ENCODE measurements at regions of chr16 and their contacts with region 1.

Region 1: DNA sequence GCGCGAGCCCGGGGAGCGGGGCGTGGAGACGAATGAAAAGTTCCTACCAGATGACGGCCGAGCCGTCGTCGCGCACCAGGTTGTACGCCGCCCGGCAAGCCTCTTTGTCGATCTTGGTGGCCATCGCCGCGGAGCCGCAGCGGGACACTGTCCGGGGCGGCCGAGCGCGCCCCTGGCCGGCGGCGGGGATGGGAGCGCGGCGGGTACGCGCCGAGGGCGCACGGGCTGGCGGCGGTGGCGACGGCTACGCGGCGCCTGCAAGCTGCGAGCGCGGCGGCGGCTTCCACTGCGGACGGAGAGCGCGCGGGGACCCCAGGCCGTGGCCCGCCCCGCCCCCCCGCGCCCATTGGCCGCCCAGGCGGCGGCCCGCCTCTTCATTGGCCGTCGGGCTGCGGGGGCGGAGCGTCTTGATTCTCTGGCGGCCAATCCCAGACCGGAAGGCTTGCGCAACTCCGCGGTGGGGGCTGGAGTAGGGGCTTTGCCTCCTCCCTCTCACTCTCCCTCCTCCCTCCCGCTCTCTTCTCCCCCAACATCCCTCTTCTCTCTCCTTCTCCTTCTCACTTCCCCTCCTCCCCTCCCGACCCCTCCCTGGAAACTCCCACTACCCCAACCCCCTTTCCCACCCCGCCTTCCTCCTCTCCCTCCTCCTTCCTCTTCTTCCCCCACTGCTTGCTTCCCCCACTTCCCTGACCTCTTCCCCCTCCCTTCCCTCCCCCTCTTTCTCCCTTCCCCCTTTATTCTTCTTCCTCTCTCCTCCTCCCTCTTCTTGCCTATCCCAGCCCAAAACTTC is at the start of gene COTL1:
- DNase-seq: peak; percentile 90
- H3K4me3 ChIP-seq: peak within 1 kb of the TSS; percentile 65
- CTCF ChIP-seq: no peak

Region 2: DNA sequence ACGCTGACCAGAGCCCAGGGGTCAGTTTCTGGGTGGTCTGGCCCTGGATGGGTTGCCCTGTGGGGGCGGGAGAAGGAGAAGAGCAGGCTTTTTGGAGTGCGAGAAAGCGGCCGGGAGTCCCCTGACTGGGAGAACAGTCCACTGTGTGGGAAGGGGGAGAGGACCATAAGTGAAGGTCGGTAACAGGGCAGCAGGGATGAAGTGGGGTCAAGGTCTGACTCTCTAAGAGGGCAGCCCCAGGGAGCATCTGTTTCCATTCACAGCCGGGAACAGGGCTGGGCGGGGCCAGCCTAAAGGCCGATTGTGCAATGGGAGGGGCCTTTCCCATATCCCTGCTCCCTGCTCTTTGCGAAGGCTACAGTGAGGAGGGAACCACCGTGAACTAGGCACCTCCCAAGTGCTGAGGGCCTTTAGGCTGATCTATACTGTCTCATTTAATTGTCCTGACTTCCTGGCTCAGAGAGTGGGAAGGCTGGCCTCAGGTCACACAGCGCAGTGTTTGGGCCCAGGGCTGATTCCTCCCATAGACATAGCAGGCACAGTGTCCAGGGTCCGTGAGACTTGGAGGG is 333.7 kb before region 1 on chr16:
- CTCF ChIA-PET with region 1: no interaction called
- POLR2A ChIA-PET with region 1: no interaction called
- DNase-seq: no peak
- H3K4me3 ChIP-seq: no peak overlapping the region
- CTCF ChIP-seq: no peak

Region 3: DNA sequence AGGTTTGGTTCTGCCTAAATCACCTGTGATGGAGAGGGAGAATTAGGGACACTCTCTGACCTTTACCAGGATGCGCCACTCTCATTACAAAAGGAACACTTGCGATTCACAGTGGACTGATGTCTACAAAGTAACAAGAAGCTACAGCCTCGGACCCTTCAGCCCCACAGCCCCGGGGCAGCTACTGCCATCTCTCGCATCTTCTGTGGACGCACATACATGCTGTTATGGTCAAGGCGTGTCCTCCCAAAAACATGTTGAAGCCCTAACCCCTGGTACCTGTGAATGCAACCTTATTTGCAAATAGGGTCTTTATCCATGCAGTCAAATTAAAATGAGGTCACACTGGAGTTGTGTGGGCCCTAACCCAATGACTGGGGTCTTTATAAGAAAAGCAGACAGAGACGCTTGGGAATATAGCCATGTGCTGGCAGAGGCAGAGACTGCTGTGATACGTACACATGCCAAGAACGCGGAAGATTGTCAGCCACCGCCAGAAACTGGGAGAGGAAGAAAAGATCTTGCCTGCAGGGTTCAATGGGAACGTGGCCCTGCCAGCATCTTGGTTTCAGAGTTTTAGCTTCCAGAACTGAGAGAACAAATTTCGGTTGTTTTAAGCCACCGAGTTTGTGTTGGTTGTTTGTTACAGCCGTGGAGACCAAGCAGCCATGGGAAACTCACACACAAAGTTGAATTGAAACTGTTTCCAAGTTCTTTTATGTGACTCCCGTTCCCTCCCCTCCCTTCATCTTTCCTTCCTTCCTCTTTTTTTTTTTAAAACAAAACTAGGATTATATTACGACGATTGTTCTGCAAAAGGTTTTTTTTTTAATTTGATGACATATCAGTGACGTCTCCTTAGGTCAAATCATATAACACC is 226.6 kb before region 1 on chr16:
- CTCF ChIA-PET with region 1: no interaction called
- POLR2A ChIA-PET with region 1: no interaction called
- DNase-seq: no peak
- H3K4me3 ChIP-seq: no peak overlapping the region
- CTCF ChIP-seq: no peak

Region 4: DNA sequence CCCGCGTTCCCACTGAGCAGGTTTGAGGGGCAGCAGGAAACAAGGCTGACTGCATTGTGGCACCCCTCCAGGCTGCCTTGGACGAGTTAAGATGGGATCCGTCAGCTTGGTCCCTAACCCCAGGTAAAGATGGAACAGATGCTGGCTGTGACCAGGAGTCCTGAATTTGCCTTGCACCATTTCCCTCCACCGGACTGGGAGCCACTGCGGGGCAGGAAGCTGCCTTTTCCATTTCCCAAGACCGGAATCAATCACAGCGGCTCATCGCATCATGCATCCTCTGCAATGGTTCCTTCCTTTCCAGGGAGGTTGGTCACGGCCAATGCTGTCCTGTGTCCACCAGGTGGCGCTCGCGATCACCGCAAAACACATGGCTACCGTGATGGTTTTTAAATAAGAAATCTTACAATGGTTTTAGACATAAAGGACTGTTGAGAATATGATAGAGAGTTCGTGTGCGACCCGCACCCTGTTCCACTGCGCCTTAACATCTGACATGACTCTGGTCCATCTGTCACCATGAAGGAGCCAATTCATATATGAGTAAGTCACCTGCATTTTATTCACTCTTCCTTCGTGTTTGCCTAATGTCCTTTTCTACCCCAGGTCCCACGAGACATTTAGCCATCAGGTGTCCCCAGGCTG is 106.7 kb before region 1 on chr16:
- CTCF ChIA-PET with region 1: interaction called, 446 read pairs
- POLR2A ChIA-PET with region 1: interaction called, 17 read pairs
- DNase-seq: peak; percentile 36
- H3K4me3 ChIP-seq: no peak overlapping the region
- CTCF ChIP-seq: peak; percentile 85

Region 5: GRCh38 chr16:84537491-84538151 is 80.4 kb before region 1 on chr16:
- CTCF ChIA-PET with region 1: interaction called, 25 read pairs
- POLR2A ChIA-PET with region 1: interaction called, 23 read pairs
- DNase-seq: no peak
- H3K4me3 ChIP-seq: no peak overlapping the region
- CTCF ChIP-seq: no peak

Region 6: DNA sequence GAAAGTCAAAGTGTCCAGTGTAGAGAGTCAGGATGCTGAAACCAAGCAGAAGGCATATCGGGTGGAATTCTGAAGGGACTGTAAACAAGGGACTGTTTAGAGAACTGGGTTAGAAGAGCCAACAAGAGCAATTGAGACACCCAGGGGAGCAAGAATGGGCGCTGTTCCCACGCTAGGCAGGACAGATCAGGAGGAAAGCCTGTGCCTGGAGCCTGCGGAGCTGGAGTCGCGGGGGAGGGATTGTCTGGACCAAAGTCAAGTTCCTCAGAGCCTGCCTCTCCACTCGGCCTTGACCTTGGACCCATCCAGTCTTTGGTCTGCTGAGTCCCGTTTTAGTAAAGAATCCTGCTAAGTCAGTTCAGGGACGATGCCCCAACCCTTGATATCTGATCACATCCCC is 15.6 kb after region 1 on chr16:
- CTCF ChIA-PET with region 1: interaction called, 13 read pairs
- POLR2A ChIA-PET with region 1: no interaction called
- DNase-seq: no peak
- H3K4me3 ChIP-seq: no peak overlapping the region
- CTCF ChIP-seq: no peak

Region 7: DNA sequence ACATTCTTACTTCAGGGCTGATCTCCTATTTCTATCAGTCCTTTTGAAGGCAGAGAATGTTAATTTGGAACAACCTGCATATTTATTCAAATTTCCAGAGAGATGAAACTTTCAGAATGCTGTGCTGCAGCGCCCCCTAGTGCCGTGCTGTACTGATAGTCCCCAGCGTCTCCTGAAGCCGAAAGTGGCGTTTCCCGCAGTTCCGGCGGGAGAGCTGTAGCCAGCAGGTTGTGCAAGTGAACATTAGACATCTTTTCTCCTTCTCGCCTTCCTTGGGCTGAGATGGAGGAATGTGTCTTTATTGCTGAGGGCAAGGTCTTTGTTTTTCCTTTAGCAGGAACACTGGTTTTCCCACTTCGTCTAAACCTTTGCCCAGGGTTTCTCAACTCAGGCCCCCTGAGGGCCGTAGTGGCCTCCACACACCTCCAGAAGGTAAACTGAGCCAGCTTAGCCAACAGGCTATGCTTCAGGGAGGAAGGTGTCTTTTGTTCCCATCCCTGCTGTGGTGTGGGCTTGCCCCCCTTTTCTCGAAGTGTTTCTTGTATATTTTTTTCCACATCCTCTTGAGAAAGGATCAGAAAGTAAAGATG is 108.2 kb after region 1 on chr16:
- CTCF ChIA-PET with region 1: interaction called, 185 read pairs
- POLR2A ChIA-PET with region 1: interaction called, 4 read pairs
- DNase-seq: no peak
- H3K4me3 ChIP-seq: no peak overlapping the region
- CTCF ChIP-seq: peak; percentile 88

Region 8: DNA sequence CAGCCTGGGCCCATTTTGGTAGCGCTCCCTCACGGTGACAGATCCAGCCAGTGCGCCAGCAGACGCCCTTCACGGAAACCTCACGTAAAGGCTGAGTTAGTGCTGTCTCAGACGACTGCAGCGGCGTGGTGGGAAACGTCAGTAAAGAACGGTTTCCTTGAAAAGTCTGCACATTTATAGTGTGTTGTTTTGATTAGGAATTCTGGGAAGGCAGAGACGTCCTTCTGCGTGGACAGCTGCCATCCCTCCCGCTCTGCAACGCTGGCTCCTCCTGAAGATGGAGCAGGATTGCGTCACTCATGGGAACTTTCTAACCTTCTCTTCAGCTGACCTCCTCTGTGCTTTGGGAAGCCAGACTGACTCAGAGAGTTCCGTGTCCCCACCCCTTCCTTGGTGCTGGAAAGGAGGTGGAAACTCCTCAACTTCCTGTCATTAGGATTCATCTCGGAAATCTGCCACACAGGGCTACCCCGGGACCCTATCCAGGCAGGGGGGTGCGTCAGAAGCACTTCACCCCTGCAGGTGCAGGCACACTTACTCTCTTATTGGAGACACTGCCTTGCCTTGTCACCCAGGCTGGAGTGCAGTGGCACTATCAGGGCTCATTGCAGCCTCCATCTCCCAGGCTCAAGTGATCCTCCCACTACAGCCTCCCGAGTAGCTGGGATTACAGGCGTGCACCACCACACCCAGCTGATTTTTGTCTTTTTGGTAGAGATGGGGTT is 177.5 kb after region 1 on chr16:
- CTCF ChIA-PET with region 1: no interaction called
- POLR2A ChIA-PET with region 1: no interaction called
- DNase-seq: peak; percentile 70
- H3K4me3 ChIP-seq: no peak overlapping the region
- CTCF ChIP-seq: no peak

Region 9: GRCh38 chr16:84970447-84971127 is 352.6 kb after region 1 on chr16:
- CTCF ChIA-PET with region 1: interaction called, 24 read pairs
- POLR2A ChIA-PET with region 1: interaction called, 3 read pairs
- DNase-seq: peak; percentile 16
- H3K4me3 ChIP-seq: no peak overlapping the region
- CTCF ChIP-seq: peak; percentile 87